ENCODE measurements at regions of chr10 and their contacts with region 1.

Region 1: DNA sequence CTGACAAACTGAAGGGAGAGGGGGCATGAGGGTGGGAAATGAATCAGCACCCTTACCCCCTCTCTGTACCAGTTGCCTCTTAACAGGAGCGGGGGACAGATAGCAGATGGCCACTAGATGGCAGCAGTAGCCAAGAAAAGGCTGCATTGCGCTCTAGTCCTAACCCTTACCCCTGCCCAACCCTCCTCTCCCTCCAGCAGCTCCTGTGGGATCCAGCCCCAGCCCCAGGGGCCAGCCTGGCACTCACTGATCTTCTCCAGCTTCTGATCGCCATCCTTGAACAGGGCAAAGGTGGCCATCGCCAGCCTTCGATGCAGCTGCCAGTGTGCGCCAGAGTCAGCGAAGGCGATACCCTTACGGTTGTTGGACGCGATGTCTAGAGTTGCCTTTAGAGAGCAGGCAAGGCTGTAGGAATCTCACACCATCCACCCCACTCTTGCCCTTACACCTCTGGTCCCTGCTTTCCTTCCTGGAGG is 2.2 kb downstream of the CYP17A1 start:
- DNase-seq: peak; percentile 32 to 87
- H3K4me3 ChIP-seq: no peak overlapping the region
- H3K27ac ChIP-seq: no peak overlapping the region
- H3K4me1 ChIP-seq: peaks cover 0 to 4% of the 10 kb centered on the region in 2 donors
- H3K27me3 ChIP-seq: no peaks in the 10 kb centered on the region
- CTCF ChIP-seq: peak; percentile 71 to 85 (median 84)

Region 2: DNA sequence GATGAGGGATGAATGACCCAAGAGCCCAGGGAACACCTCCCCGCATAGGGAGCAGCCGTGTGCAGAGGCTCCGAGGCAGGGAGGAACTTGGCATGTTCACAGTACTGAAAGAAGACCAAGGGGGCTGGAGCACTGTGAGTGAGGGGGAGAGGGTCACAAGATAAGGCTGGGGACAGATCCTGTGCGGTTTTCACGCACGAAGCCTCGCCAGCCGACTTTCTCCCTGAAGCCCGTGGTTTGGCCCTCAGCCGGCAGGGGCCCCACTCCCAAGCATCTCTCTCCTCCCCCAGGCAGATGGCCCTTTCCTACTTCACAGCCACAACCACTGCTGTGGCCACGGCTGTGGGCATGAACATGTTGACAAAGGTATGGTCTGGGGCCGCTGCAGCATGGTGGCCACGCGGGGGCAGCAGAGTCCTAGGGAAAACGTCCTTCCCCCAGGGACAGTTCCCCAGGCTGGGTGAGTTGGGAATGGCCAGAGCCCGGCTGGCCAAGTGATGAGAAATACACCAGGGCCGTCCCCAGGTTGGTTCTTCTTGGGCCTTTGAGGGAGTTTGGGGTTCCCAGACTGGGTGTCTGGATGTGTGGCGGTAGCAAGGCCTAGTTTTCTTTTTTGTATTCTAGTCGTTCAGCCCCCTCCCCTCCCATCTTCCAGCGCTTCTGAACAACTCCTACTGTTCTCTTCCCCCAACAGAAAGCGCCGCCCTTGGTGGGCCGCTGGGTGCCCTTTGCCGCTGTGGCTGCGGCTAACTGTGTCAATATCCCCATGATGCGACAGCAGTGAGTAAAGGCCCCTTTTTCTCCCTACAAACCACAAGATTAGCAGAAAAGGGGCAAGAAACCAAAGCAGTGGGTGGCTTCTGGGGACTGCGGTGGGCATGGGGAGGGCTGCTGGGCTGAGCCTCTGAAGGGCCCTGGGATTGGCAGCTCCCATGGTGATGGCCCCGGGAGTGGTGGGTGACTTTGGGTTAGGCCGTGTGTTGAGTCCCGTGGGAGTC is 105.7 kb before region 1 on chr10:
- intact Hi-C with region 1: loop called (anchors 1 kb)
- DNase-seq: peak; percentile 48 to 93
- H3K4me3 ChIP-seq: no peak overlapping the region
- H3K27ac ChIP-seq: no peak overlapping the region
- H3K4me1 ChIP-seq: peaks cover 0 to 7% of the 10 kb centered on the region in 2 donors
- H3K27me3 ChIP-seq: no peaks in the 10 kb centered on the region
- CTCF ChIP-seq: peak; percentile 92 to 94 (median 92)

Region 3: DNA sequence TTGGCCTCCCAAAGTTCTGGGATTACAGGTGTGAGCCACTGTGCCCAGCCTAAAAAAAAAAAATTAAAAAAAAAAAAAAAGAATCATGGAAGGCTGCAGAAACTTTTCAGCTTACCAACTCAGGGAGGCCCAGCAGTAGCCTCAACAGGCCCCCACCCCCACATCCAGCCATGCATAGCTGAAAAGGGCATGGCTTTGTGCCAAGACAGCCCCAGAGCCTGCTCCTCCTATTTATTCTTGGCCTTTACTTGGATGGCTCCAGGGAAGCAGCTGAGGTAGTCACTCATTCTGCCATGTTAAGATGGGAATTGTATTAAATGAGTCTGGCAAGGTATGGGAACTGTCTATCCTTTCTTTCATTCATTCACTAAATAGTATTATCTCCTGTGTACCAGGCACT is 69.3 kb after region 1 on chr10:
- intact Hi-C with region 1: loop called (anchors 1 kb)
- DNase-seq: no peak
- H3K4me3 ChIP-seq: no peak overlapping the region
- H3K27ac ChIP-seq: no peak overlapping the region
- H3K4me1 ChIP-seq: no peaks in the 10 kb centered on the region
- H3K27me3 ChIP-seq: no peaks in the 10 kb centered on the region
- CTCF ChIP-seq: no peak

Region 4: GRCh38 chr10:103069453-103070331 is 234.6 kb after region 1 on chr10:
- intact Hi-C with region 1: loop called (anchors 5 kb)
- DNase-seq: peak in 1 of 2 donors; percentile 82
- H3K4me3 ChIP-seq: no peak overlapping the region
- H3K27ac ChIP-seq: peak overlapping the region in 1 of 2 donors; percentile 47
- H3K4me1 ChIP-seq: no peaks in the 10 kb centered on the region
- H3K27me3 ChIP-seq: no peaks in the 10 kb centered on the region
- CTCF ChIP-seq: peak; percentile 66 to 80 (median 75)

Region 5: GRCh38 chr10:103254538-103255325 is 419.7 kb after region 1 on chr10:
- intact Hi-C with region 1: no loop called
- DNase-seq: no peak
- H3K4me3 ChIP-seq: no peak overlapping the region
- H3K27ac ChIP-seq: no peak overlapping the region
- H3K4me1 ChIP-seq: no peaks in the 10 kb centered on the region
- H3K27me3 ChIP-seq: no peaks in the 10 kb centered on the region
- CTCF ChIP-seq: no peak

Region 6: GRCh38 chr10:103333925-103334520 is 499.0 kb after region 1 on chr10:
- intact Hi-C with region 1: loop called (anchors 10 kb)
- DNase-seq: no peak
- H3K4me3 ChIP-seq: no peak overlapping the region
- H3K27ac ChIP-seq: no peak overlapping the region
- H3K4me1 ChIP-seq: no peaks in the 10 kb centered on the region
- H3K27me3 ChIP-seq: no peaks in the 10 kb centered on the region
- CTCF ChIP-seq: peak; percentile 38 to 62 (median 52)